ENCODE measurements at regions of chr6 and their contacts with region 1.

Region 1: GRCh38 chr6:149045404-149045803 is 272.1 kb upstream of the TAB2 start:
- DNase-seq: no peak
- ATAC-seq: no peak
- H3K4me3 ChIP-seq: no peak overlapping the region
- H3K27ac ChIP-seq: no peak overlapping the region
- H3K4me1 ChIP-seq: peaks cover 0 to 19% (median 2%) of the 10 kb centered on the region in 12 donors
- H3K27me3 ChIP-seq: no peaks in the 10 kb centered on the region
- CTCF ChIP-seq: no peak
- POLR2A ChIP-seq: no peak

Region 2: GRCh38 chr6:149423964-149424440 is 378.6 kb after region 1 on chr6:
- intact Hi-C with region 1: loop called in 1 of 10 experiments (anchors 5 kb)
- DNase-seq: no peak
- ATAC-seq: no peak
- H3K4me3 ChIP-seq: no peak overlapping the region
- H3K27ac ChIP-seq: peak overlapping the region in 2 of 12 donors; percentile 48 to 63
- H3K4me1 ChIP-seq: peaks cover 0 to 10% (median 2%) of the 10 kb centered on the region in 12 donors
- H3K27me3 ChIP-seq: peaks cover 0 to 6% (median 0%) of the 10 kb centered on the region in 9 donors
- CTCF ChIP-seq: no peak
- POLR2A ChIP-seq: no peak

Measured in heart left ventricle (tissue), 16 donors.